Activated B cell treated with CpG ODN at 0.5 μM for 24 hours (primary cell): ENCODE measurements at regions of chr7 and their contacts with region 1.

Region 1: DNA sequence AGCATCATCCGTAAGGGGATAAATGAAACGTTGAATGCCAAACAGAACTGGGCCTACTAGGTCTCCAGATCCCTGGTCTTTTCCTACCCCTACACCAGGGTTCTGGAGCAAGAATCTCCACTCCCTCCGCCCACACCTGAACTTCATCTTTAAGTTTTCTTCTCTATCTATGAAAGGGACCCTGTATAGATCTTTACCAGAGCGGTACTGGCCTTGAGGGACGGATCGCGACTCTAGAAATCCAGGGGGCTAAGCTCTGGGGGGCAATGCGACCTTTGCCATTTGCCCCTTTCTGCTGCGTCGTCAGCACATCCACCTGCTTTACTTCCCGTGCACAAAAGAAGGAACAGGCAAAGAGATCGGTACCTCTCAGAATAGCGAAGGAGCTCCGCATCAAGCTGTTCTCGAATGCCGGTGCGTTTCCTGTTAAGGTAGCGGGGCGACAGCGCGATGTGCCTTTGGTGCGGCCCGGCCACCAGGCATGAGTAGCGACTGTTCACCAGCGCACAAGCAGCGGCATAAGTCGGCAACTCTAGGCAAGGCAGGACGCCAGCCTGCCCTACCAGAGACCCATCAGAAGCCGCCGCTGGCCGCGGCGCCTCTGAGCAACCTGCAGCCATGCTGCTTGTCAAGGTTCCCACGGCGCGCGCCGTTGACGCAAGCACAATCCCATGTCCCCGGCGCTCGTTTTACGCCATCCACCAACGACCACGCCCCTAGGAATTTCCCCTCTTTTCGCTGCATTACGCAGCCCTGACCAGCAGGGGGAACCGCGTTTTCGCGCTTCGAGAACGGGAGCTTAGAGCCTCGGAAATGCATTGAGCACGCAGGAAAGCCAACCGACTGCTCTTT is at the start of gene POLR1F:
- DNase-seq: peak; percentile 83
- ATAC-seq: peak; percentile 98
- H3K4me3 Mint-ChIP-seq: peak within 1 kb of the TSS; percentile 97
- H3K27ac Mint-ChIP-seq: peak within 1 kb of the TSS; percentile 88
- H3K4me1 Mint-ChIP-seq: peaks cover 43% of the 10 kb centered on the region
- H3K27me3 Mint-ChIP-seq: peaks cover 4% of the 10 kb centered on the region
- CTCF ChIP-seq: no peak
- total RNA-seq, gene POLR1F: 19.9 and 20.0 TPM in 2 replicates

Region 2: GRCh38 chr7:17940302-17940883 is 1768.2 kb before region 1 on chr7 and contains the start of gene SNX13:
- CTCF ChIA-PET with region 1: no interaction called
- POLR2A ChIA-PET with region 1: no interaction called
- intact Hi-C with region 1: loop called (anchors 5 kb)
- DNase-seq: peak; percentile 84
- ATAC-seq: peak; percentile 91
- H3K4me3 Mint-ChIP-seq: peak within 1 kb of the TSS; percentile 98
- H3K27ac Mint-ChIP-seq: peak within 1 kb of the TSS; percentile 98
- H3K4me1 Mint-ChIP-seq: peaks cover 44% of the 10 kb centered on the region
- H3K27me3 Mint-ChIP-seq: no peaks in the 10 kb centered on the region
- CTCF ChIP-seq: no peak
- total RNA-seq, gene SNX13: 40.0 and 46.5 TPM in 2 replicates

Region 3: DNA sequence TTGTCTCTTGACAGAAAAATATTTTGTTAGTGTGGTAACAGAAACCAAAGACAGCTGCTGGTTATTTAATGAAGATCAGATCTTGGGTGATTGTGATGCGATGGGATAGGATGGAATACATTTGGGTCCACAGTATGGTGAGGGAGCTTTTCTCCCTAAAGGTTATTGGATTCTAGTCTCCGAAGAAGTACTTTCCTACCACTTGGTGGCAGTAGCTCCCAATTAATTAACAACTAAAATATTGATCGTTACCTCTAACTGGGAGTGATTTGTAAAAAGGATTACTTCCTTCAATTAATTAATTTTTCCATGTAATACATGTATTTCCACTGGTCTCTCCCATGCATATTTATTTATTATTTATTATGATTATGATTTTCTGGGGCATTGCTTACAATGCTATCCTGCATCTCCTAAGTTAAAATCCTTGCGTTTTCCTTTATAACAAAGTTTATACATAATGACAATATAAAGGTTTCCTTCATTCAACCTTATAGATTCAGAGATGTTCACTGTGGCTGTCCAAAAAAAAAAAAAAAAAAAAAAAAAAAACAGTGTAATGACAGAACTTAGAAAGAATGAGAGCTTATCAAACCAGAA is 39.2 kb after region 1 on chr7:
- CTCF ChIA-PET with region 1: interaction called, 15 read pairs
- POLR2A ChIA-PET with region 1: interaction called, 3 read pairs
- intact Hi-C with region 1: loop called (anchors 1 kb)
- DNase-seq: no peak
- ATAC-seq: peak; percentile 25
- H3K4me3 Mint-ChIP-seq: no peak overlapping the region
- H3K27ac Mint-ChIP-seq: no peak overlapping the region
- H3K4me1 Mint-ChIP-seq: no peaks in the 10 kb centered on the region
- H3K27me3 Mint-ChIP-seq: peaks cover 6% of the 10 kb centered on the region
- CTCF ChIP-seq: no peak

Region 4: GRCh38 chr7:20114468-20114867 is 405.8 kb after region 1 on chr7:
- CTCF ChIA-PET with region 1: interaction called, 3 read pairs
- POLR2A ChIA-PET with region 1: no interaction called
- intact Hi-C with region 1: loop called (anchors 2 kb)
- DNase-seq: no peak
- ATAC-seq: peak; percentile 90
- H3K4me3 Mint-ChIP-seq: peak overlapping the region; percentile 39
- H3K27ac Mint-ChIP-seq: peak overlapping the region; percentile 54
- H3K4me1 Mint-ChIP-seq: peaks cover 25% of the 10 kb centered on the region
- H3K27me3 Mint-ChIP-seq: no peaks in the 10 kb centered on the region
- CTCF ChIP-seq: no peak

Region 5: GRCh38 chr7:20238754-20239324 is 530.2 kb after region 1 on chr7:
- CTCF ChIA-PET with region 1: no interaction called
- POLR2A ChIA-PET with region 1: no interaction called
- intact Hi-C with region 1: loop called (anchors 2 kb)
- DNase-seq: peak; percentile 34
- ATAC-seq: peak; percentile 86
- H3K4me3 Mint-ChIP-seq: peak overlapping the region; percentile 73
- H3K27ac Mint-ChIP-seq: peak overlapping the region; percentile 92
- H3K4me1 Mint-ChIP-seq: peaks cover 69% of the 10 kb centered on the region
- H3K27me3 Mint-ChIP-seq: no peaks in the 10 kb centered on the region
- CTCF ChIP-seq: no peak

Region 6: DNA sequence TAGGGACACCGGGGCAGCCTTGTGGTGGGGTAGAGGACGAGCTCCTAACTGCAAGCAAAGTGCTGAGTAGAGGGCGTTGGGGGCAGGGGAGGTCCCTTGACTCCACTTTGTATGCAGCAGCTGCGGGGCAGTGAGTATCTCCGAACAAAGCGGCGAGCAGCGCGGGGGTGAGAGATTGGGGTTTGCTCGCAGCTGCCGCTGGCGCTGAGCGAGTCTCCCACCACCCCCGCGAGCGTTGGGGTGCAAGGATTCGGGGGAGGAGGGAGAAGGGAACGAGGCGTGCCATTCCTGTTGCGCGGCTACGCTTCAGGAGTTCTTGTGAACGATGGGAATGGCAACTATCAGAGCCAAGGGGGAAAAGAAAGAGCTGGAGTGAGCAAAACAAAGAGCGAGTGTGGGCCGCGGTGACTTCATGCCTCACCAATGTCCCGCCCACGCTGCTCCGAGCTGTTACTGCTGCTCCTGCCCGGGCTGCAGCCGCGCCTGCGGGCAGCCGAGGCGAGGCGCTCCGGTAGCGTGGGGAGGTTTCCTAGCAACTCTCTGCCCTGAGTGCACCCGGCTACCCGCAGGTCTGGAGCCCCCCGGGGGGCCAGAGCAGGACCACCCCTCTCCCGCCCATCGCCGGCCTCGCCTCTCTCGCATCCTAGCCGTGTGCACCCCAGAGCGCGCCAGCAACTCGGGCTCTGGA is 621.8 kb after region 1 on chr7 and contains the start of gene ITGB8:
- CTCF ChIA-PET with region 1: interaction called, 3 read pairs
- POLR2A ChIA-PET with region 1: interaction called, 3 read pairs
- intact Hi-C with region 1: loop called (anchors 2 kb)
- DNase-seq: no peak
- ATAC-seq: peak; percentile 69
- H3K4me3 Mint-ChIP-seq: peak within 1 kb of the TSS; percentile 95
- H3K27ac Mint-ChIP-seq: peak within 1 kb of the TSS; percentile 84
- H3K4me1 Mint-ChIP-seq: peaks cover 37% of the 10 kb centered on the region
- H3K27me3 Mint-ChIP-seq: peaks cover 2% of the 10 kb centered on the region
- CTCF ChIP-seq: no peak
- total RNA-seq, gene ITGB8: 0.75 and 1.3 TPM in 2 replicates

Region 7: DNA sequence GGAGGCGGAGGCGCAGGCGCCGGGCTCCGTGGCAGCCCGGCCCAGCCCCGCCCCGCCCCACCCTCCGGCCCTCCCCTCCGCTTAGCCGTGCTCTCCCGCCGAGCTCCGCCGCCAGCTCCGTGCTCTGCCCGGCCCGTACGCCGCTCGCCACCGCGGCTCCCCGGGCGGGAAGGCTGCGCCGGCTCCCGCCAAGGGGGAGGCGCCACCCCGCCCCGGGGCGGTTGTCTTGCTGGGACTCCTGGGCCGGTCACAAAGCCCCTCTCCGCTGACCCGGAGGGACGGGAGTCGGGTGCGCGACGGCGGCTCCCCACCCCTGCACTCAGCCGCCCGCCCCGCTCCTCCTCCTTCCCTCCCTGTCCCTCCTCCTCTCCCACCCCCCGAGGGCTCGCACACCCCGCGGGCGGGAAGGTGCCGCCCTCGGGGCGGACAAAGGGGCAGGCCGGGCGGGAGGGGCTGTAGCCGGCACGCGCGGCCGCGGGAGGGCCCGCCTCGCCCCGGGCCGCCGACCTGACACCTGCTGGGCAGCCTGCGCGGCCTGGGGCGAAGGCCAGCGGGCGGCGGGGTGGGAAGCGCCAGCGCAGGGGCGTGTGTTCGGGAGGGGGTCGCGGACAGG is 1089.6 kb after region 1 on chr7:
- CTCF ChIA-PET with region 1: interaction called, 3 read pairs
- POLR2A ChIA-PET with region 1: no interaction called
- intact Hi-C with region 1: loop called (anchors 5 kb)
- DNase-seq: no peak
- ATAC-seq: peak; percentile 82
- H3K4me3 Mint-ChIP-seq: peak overlapping the region; percentile 76
- H3K27ac Mint-ChIP-seq: no peak overlapping the region
- H3K4me1 Mint-ChIP-seq: peaks cover 22% of the 10 kb centered on the region
- H3K27me3 Mint-ChIP-seq: peaks cover 42% of the 10 kb centered on the region
- CTCF ChIP-seq: no peak